Activated CD4-positive, alpha-beta T cell treated with anti-CD3 and anti-CD28 coated beads, Interleukin-2, amount 10 ng/mL, durations not matched to agents 24 days and 14 days (primary cell): ENCODE measurements at regions of chr2 and their contacts with region 1.

Region 1: GRCh38 chr2:99180755-99181623 is at the starts of genes MITD1 and MRPL30:
- DNase-seq: peak; percentile 97
- H3K4me3 Mint-ChIP-seq: peak within 1 kb of the TSS; percentile 100
- H3K27ac Mint-ChIP-seq: peak within 1 kb of the TSS; percentile 97
- H3K4me1 Mint-ChIP-seq: peaks cover 43% of the 10 kb centered on the region
- H3K27me3 Mint-ChIP-seq: no peaks in the 10 kb centered on the region
- total RNA-seq, gene MITD1: 49.9 and 52.8 TPM in 2 replicates
- total RNA-seq, gene MRPL30: 29.0 and 31.2 TPM in 2 replicates

Region 2: DNA sequence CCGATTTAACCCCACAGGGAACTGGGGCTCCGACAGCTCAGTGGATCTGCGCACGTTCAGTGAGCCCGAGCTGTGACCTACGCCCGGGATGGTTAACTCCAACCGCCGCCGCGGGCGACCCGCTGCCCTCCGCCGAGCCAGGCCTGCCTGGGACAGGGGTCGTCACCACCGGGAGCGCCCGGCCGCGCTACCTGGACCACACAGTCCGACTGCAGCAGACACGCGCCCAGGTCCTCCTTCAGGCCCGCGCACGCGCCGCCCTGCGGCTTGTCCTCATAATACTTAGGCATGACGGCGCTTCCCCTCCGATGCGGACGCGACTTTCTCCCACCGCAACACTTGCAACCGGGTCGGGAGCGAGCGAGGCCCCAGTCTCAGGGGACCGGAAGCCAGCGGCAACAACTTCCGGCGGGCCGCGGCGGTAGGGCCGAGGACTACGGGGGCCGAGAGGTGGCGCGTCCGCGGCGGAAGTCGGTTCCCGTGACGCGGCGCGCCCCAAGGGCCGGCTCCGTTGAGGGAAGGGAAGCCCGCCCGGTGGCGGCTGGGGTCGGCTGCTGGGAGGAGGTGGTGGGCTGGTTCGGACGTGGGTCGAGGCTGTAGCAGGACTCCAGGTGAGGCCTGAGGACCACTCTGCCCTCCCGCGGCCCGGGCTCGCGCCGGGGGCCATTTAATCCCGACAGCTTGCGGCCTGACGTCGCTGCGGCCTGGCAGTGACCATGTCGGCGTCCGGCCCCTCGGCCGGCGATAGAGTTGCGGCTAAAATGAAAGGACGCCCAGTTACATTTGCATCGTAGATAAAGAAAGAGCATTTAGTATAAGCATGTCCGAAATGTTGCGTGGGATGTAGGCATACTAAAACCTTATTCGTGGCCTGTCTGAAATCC is 572.6 kb before region 1 on chr2 and contains the starts of genes COA5 and UNC50:
- intact Hi-C with region 1: loop called (anchors 5 kb)
- DNase-seq: peak; percentile 98
- H3K4me3 Mint-ChIP-seq: peak within 1 kb of the TSS; percentile 90
- H3K27ac Mint-ChIP-seq: peak within 1 kb of the TSS; percentile 95
- H3K4me1 Mint-ChIP-seq: peaks cover 50% of the 10 kb centered on the region
- H3K27me3 Mint-ChIP-seq: no peaks in the 10 kb centered on the region
- total RNA-seq, gene COA5: 20.4 and 22.0 TPM in 2 replicates
- total RNA-seq, gene UNC50: 38.5 and 39.0 TPM in 2 replicates

Region 3: DNA sequence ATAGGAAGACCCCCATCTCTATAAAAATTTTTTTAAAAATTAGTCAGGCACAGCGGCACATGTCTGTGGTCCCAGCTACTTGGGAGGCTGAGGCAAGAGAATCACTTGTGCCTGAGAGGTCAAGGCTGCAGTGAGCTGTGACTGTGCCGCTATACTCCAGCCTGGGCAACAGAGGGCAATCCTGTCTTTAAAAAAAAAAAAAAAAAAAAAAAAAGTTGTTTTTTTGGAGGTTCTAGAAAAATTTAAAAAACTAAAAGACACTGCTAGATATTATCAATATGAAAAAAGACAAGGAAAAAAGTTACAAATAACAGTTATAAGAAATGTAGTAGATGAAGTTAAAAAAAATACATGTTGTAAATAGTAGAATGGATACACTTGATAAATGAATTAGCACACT is 95.6 kb before region 1 on chr2:
- intact Hi-C with region 1: loop called (anchors 5 kb)
- DNase-seq: no peak
- H3K4me3 Mint-ChIP-seq: no peak overlapping the region
- H3K27ac Mint-ChIP-seq: no peak overlapping the region
- H3K4me1 Mint-ChIP-seq: peaks cover 2% of the 10 kb centered on the region
- H3K27me3 Mint-ChIP-seq: peaks cover 32% of the 10 kb centered on the region

Region 4: DNA sequence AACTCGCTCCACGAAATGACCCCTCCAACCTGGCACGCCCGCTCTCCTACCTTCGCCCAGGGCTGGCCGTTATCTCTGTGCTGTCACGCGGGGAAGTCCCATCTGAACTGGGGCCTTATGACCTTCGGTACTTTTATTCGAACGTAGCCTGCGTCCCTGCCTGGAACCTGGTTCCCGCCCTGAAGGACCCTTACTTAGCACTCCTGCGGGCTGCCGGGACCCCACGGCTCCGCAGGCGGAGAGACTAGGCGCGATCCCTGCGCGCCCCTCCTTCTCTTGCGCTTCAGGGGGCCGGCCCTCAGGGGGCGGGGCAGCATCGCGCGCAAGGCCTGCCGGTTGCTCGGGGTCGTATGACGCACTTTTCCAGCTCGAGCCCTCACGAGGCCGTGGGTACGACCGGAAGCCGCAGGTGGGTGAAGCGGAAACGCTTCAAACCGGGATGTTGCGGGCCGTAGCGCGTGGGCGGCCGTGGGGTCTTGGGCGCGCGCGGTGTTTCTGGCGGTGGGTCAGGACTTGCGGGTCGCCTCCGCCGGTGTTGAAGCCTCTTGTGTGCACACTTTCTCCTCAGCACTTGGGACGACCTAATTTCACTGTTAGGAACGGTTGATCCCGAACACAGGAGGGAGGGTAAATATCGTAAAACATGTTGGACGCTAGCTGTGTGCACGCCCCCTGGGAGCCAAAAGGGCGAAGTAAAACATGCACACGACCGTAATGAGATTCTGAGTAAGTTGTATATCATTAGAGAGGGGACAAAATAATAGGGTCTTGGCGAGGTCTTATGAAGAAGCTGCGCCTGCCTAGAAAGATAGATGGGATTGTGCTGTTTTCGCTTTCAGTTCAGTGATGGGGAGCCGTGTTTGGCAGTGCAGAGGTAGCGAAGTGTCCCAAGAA is 26.1 kb before region 1 on chr2 and contains the starts of genes LIPT1 and TSGA10:
- intact Hi-C with region 1: loop called (anchors 1 kb)
- DNase-seq: peak; percentile 98
- H3K4me3 Mint-ChIP-seq: no peak within 1 kb of the TSS
- H3K27ac Mint-ChIP-seq: peak within 1 kb of the TSS; percentile 83
- H3K4me1 Mint-ChIP-seq: peaks cover 35% of the 10 kb centered on the region
- H3K27me3 Mint-ChIP-seq: no peaks in the 10 kb centered on the region
- total RNA-seq, gene LIPT1: 3.3 and 3.9 TPM in 2 replicates
- total RNA-seq, gene TSGA10: 3.2 and 3.7 TPM in 2 replicates

Region 5: DNA sequence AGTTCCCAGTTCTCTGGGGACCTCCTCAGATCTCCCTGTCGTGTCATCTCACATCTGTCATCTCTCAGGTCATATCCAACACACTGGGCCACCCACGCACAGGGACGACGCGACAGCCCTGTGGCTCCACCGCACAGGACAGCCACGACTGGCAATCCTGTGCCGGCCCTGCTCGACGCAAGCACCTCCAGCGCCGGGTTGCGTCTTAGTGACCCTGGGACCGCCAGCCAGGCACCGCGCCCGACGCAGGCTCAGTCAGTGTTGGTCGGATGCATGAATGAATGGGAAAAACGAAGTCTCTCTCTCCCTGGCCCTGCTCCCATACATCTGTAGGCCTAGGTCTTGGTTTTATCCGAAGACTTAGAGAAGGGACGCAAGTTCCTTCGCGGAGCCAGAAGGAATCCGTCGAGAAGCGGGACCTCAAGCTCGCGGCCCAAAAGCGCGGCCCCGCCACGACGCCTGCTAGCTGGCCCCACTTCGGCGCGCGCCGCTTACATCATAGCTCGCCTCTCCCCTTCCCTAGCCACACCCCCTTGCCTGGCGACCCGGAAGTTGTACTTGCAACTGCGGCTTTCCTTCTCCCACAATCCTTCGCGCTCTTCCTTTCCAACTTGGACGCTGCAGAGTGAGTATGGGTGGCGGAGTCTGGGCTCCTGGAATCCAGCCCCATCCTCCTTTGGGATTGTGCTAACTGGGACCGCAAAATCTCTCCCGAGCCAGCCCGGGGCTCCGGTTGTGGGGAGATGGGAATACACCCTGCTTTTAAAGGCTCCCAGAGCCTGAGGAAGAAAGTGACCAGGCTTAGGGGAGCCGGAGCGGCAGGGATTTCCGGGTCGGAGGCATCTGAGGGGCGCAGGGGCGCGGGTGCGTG is 1820.9 kb after region 1 on chr2 and contains the start of gene RPL31:
- intact Hi-C with region 1: loop called (anchors 10 kb)
- DNase-seq: peak; percentile 99
- H3K4me3 Mint-ChIP-seq: peak within 1 kb of the TSS; percentile 100
- H3K27ac Mint-ChIP-seq: peak within 1 kb of the TSS; percentile 96
- H3K4me1 Mint-ChIP-seq: peaks cover 46% of the 10 kb centered on the region
- H3K27me3 Mint-ChIP-seq: no peaks in the 10 kb centered on the region
- total RNA-seq, gene RPL31: 1,154 and 1,159 TPM in 2 replicates